ENCODE measurements at regions of chr15 and their contacts with region 1.

Region 1: GRCh38 chr15:43517354-43518196 is at the start of gene MAP1A:
- DNase-seq: peak; percentile 89
- H3K4me3 ChIP-seq: peak within 1 kb of the TSS; percentile 52 to 72 (median 64)
- H3K27ac ChIP-seq: peak within 1 kb of the TSS; percentile 87 to 93 (median 90)
- H3K4me1 ChIP-seq: peaks cover 0 to 43% (median 29%) of the 10 kb centered on the region in 4 donors
- H3K27me3 ChIP-seq: no peaks in the 10 kb centered on the region
- CTCF ChIP-seq: peak in 1 of 4 experiments; percentile 13
- EP300 ChIP-seq: no peak
- POLR2A ChIP-seq: peak; percentile 36 to 62
- total RNA-seq, gene MAP1A: 25.2 to 61.2 (median 32.3) TPM

Region 2: DNA sequence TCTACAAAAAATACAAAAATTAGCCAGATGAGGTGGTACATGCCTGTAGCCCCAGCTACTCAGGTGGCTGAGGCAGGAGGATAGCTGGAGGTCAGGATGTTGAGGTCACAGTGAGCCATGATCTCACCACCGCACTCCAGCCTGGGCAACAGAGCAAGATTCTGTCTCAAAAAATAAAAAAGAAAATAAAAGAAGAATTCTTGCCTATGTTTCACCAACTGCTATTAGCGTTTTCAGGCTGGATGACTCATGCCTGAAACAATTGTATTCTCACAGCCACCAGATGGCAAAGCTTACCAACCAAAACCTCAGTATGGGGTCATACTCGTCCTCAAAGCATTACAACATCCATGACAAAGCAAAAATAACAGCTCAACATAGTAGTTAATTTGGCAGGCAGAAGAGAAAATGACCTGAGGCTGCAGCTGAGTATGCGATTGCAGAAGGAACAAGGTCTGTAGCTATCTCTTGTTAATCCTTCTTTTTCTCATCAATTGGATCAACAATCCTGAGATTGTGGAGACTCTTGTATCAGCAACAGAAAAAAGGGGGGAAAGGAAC is 76.8 kb before region 1 on chr15:
- intact Hi-C with region 1: loop called (anchors 2 kb)
- DNase-seq: peak; percentile 68
- H3K4me3 ChIP-seq: no peak overlapping the region
- H3K27ac ChIP-seq: peak overlapping the region; percentile 60 to 67 (median 64)
- H3K4me1 ChIP-seq: peaks cover 0 to 13% (median 8%) of the 10 kb centered on the region in 4 donors
- H3K27me3 ChIP-seq: no peaks in the 10 kb centered on the region
- CTCF ChIP-seq: peak; percentile 41 to 65 (median 50)
- EP300 ChIP-seq: no peak
- POLR2A ChIP-seq: no peak

Measured in sigmoid colon (tissue), 7 donors.